ENCODE measurements at regions of chr1 and their contacts with region 1.

Region 1: DNA sequence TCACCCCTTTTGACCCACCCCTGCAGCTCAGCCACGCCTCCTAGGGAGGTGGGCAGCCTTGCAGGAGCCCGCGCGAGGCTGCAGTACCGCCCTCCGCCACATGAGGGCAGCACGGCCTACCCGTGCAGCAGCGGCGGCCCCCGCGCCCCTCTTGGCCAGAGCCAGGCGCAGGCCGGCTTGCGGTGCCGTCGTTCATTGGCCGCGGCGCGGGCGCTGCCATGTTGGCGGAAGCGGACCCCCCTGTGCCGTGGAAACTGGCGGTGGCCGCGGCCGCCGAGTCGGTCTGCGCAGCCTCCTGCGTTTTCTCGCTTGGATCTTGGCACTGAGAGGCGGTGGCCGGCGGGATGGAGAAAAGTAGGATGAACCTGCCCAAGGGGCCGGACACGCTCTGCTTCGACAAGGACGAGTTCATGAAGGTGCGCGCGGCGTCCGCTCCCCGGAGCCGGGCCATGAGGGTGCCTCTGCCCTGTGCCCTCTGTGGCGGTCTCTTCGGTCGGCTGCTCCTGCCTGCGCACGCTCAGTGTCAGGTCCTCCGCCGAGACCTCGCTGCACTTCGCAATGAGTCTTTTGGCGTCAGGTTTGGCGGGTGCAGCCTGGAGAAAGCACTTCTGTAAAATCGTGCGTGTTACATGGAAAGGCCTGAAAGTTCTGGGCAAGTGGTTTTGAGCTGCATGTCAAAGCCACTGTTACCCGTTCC is at the start of gene COG2:
- DNase-seq: peak; percentile 99
- ATAC-seq: peak; percentile 94
- H3K4me3 ChIP-seq: peak within 1 kb of the TSS; percentile 86
- H3K27ac ChIP-seq: peak within 1 kb of the TSS; percentile 35
- H3K4me1 ChIP-seq: peaks cover 25% of the 10 kb centered on the region
- H3K27me3 ChIP-seq: peaks cover 30% of the 10 kb centered on the region
- CTCF ChIP-seq: peak; percentile 100
- total RNA-seq, gene COG2: 42.0 and 51.0 TPM in 2 replicates

Region 2: GRCh38 chr1:229717786-229718576 is 924.4 kb before region 1 on chr1:
- CTCF ChIA-PET with region 1: no interaction called
- POLR2A ChIA-PET with region 1: no interaction called
- intact Hi-C with region 1: no loop called
- DNase-seq: peak; percentile 35
- ATAC-seq: no peak
- H3K4me3 ChIP-seq: peak overlapping the region; percentile 1; the same call in 1 of the 2 replicates
- H3K27ac ChIP-seq: no peak overlapping the region
- H3K4me1 ChIP-seq: no peaks in the 10 kb centered on the region
- H3K27me3 ChIP-seq: no peaks in the 10 kb centered on the region
- CTCF ChIP-seq: no peak

Region 3: GRCh38 chr1:230978491-230979388 is 336.3 kb after region 1 on chr1 and contains the starts of genes ARV1 and TTC13:
- CTCF ChIA-PET with region 1: no interaction called
- POLR2A ChIA-PET with region 1: no interaction called
- intact Hi-C with region 1: loop called (anchors 2 kb)
- DNase-seq: peak; percentile 99
- ATAC-seq: peak; percentile 99
- H3K4me3 ChIP-seq: peak within 1 kb of the TSS; percentile 91
- H3K27ac ChIP-seq: no peak within 1 kb of the TSS
- H3K4me1 ChIP-seq: peaks cover 17% of the 10 kb centered on the region
- H3K27me3 ChIP-seq: no peaks in the 10 kb centered on the region
- CTCF ChIP-seq: peak; percentile 60
- total RNA-seq, gene ARV1: 29.4 and 30.6 TPM in 2 replicates
- total RNA-seq, gene TTC13: 17.0 and 20.2 TPM in 2 replicates